Gastrocnemius medialis (tissue), 4 donors: ENCODE measurements at regions of chr18 and their contacts with region 1.

Region 1: DNA sequence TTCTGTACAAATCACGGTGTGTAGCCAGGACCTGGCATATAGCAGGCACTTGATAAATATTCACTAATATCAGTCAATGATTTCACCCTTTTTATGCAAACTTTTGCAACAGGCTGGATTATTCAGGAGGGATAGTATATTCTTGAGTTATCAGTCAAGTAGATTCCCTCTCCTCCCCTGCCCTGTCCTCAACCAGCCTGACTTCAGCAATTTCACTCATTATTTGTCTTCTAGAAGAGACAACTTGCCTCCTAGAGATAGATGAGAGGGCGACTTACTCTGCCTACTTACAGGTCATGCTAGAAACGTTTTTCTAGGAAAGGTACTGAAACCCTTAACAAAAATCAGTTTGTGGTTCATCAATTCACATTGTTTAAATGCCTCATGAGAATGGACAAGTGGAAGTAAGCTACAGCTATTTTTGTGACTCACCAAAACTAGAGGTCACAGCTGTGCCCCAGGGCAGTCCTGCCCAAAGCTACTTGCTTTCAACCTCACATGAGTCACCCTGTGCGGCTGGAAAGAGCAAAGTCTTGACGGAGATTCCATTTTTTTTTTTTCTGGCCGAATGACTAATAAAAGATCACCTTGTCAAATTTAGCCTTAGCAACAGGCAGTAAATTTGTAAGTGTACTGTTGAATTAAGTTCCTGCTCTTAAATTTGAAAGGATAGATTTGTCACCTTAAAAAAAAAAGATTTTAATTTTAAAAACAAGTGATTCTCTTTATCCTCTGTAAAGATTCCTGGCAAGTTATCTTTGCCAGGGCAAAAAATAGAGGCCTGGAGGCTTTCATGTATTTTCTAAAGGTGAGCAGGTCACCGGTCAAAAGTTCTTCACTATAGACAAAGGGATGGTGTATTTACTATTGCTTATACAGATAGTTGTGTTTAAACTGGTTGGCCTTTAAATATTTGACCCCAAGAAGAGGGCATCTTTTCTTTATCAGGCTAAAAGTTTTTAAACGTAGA is 109.0 kb upstream of the SLC35G4 start:
- DNase-seq: peak; percentile 69 to 84
- ATAC-seq: peak; percentile 99
- H3K4me3 ChIP-seq: no peak overlapping the region
- H3K27ac ChIP-seq: peak overlapping the region in 3 of 4 donors; percentile 38 to 71 (median 63)
- H3K4me1 ChIP-seq: peaks cover 4 to 12% of the 10 kb centered on the region in 2 donors
- H3K27me3 ChIP-seq: no peaks in the 10 kb centered on the region
- CTCF ChIP-seq: no peak
- POLR2A ChIP-seq: no peak

Region 2: DNA sequence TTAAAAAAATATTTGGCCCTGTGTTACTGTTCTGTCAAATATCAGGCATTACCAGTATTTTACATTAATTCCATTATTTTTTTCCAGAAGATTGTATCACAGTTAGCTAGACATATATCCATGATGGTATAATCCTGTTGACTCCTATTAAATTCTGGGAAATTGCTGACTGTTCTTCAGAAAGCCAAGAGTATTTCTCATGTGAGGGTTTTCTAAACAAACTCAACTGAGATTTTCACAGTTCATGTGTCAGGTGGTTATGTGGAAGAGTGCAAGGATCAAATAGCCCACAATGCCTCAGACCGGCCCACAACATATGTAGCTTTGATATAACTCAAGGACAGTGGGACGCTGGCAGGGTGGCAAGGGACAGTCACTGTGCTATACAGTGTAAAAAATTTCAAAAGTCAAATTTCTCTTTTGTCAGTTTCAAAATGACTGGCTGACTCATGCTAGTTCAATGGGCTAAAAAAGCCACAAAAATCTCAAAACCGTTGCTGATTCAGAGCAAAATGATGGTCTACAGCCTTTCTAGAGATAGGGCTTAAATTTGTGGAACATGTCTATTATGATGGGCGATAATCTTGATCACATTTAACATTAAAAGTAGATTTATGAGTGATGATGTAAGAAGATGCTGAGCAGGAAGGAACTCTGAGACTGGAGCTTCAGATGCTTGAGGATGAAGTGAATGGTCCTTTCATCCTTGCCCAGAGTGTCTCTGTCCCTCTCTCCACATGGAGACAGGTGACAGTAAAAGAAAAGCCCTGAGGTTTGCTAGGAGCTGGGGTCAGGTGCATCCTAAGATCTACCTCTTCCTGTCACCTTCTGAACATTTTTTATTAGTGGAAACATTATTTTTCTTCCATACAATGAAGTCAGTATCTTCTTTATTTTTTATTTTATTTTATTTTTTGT is 175.2 kb before region 1 on chr18:
- in situ Hi-C with region 1: loop called in 2 of 4 experiments (anchors 10 to 25 kb)
- intact Hi-C with region 1: no loop called
- DNase-seq: no peak
- ATAC-seq: no peak
- H3K4me3 ChIP-seq: no peak overlapping the region
- H3K27ac ChIP-seq: peak overlapping the region; percentile 43 to 72 (median 62)
- H3K4me1 ChIP-seq: peaks cover 16 to 29% of the 10 kb centered on the region in 2 donors
- H3K27me3 ChIP-seq: no peaks in the 10 kb centered on the region
- CTCF ChIP-seq: no peak
- POLR2A ChIP-seq: no peak